Activated CD4-positive, alpha-beta T cell treated with anti-CD3 and anti-CD28 coated beads, Interleukin-2, amount 10 ng/mL, durations not matched to agents 24 days and 14 days (primary cell): ENCODE measurements at regions of chr13 and their contacts with region 1.

Region 1: GRCh38 chr13:24228852-24229458 is 68.4 kb downstream of the SPATA13 start:
- DNase-seq: peak; percentile 82
- H3K4me3 Mint-ChIP-seq: no peak overlapping the region
- H3K27ac Mint-ChIP-seq: peak overlapping the region; percentile 10
- H3K4me1 Mint-ChIP-seq: peaks cover 48% of the 10 kb centered on the region
- H3K27me3 Mint-ChIP-seq: no peaks in the 10 kb centered on the region

Region 2: DNA sequence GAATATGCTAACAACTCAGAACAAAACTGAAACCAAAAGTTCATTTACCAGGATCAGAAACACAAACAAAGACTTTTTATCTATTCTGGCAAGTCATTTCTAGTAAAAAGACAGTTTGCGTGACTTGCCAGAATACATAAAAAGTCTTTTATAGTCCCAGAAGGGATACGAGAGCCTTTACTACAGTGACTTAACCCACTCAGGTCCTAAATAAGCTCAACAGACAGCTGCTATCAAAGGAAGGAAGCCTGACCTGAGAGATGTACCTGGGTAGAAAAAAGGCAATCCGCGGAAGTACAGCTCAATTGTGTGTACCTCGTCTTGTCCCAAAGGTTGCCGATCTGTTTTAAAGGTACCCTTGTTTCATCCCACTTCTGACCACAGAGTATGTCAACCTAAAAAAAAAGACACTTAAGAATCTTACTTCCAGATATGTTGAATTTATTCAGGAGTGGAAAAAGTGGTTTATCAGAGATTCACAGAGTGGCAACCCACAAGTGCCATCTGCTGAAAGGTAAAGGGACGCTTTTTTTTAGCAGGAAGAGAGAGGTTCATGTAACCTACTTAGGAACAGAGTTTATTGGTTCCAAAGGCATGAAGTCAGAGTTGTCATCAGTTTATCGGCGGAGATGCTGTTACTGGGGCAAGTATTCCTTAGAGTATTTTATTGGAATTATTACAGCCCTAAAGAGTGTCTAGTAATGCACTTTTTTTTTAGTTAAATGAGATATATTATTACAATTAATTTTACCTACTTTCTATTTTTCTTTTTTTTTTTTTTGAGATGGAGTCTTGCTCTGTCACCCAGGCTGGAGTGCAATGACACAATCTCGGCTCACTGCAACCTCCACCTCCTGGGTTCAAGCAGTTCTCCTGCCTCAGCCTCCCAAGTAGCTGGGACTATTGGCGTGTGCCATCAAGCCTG is 262.0 kb before region 1 on chr13:
- intact Hi-C with region 1: loop called (anchors 5 kb)
- DNase-seq: peak; percentile 85
- H3K4me3 Mint-ChIP-seq: peak overlapping the region; percentile 77
- H3K27ac Mint-ChIP-seq: peak overlapping the region; percentile 84
- H3K4me1 Mint-ChIP-seq: peaks cover 39% of the 10 kb centered on the region
- H3K27me3 Mint-ChIP-seq: no peaks in the 10 kb centered on the region

Region 3: DNA sequence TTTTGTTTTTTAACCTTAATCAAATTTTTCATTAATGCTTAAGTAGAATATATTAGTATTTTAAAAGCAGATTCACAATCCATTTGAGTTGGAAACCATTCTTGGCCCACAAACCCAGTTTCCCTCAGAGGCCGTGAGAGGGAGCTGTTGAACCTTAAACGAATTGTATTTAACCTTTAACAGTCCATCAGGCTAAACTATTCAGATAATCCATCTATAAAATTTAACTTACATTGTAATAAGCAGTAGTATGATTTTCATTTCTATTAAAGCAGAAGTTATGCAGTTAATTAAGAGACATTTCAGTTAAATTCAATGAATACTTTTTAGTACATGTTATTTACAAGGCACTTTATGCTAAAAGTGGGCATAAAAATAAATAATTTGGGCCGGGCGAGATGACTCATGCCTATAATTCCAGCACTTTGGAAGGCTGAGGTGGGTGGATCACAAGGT is 208.6 kb before region 1 on chr13:
- intact Hi-C with region 1: loop called (anchors 2 kb)
- DNase-seq: peak; percentile 84
- H3K4me3 Mint-ChIP-seq: no peak overlapping the region
- H3K27ac Mint-ChIP-seq: no peak overlapping the region
- H3K4me1 Mint-ChIP-seq: peaks cover 3% of the 10 kb centered on the region
- H3K27me3 Mint-ChIP-seq: peaks cover 3% of the 10 kb centered on the region

Region 4: GRCh38 chr13:24053519-24054251 is 175.3 kb before region 1 on chr13:
- intact Hi-C with region 1: loop called (anchors 2 kb)
- DNase-seq: peak; percentile 89
- H3K4me3 Mint-ChIP-seq: no peak overlapping the region
- H3K27ac Mint-ChIP-seq: no peak overlapping the region
- H3K4me1 Mint-ChIP-seq: peaks cover 11% of the 10 kb centered on the region
- H3K27me3 Mint-ChIP-seq: peaks cover 19% of the 10 kb centered on the region

Region 5: GRCh38 chr13:24207841-24208667 is 20.9 kb before region 1 on chr13:
- intact Hi-C with region 1: no loop called
- DNase-seq: no peak
- H3K4me3 Mint-ChIP-seq: no peak overlapping the region
- H3K27ac Mint-ChIP-seq: no peak overlapping the region
- H3K4me1 Mint-ChIP-seq: peaks cover 31% of the 10 kb centered on the region
- H3K27me3 Mint-ChIP-seq: peaks cover 15% of the 10 kb centered on the region